Activated CD4-positive, alpha-beta T cell treated with anti-CD3 and anti-CD28 coated beads for 36 hours (primary cell): ENCODE measurements at regions of chr17 and their contacts with region 1.

Region 1: DNA sequence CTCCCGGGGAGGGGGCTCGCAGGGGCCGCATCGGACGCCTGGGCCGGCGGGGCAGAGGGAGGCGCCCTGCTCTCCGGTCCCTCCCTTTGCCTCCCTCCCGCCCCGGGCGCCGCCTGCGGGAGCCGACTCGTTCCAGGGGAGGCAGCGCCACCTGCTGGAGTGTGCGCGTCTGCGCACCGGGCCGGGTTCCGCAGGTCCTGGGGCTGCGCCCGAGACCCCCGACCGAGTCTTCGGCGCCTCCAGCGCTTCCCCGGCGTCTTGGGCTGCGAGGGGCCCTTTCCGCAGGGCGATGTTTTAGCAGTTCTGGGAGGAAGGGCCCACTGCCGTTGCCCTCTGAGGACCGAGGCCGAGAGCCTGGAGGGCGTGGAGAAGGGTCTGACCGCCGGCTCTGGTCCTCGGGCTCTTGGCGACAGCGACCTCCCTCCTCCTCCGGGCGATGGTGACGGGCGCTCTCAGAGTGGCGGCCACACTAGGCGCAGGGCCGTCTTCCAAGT is 106.3 kb downstream of the SEC14L1 start:
- DNase-seq: peak; percentile 93
- ATAC-seq: peak; percentile 95
- H3K4me3 Mint-ChIP-seq: peak overlapping the region; percentile 32
- H3K27ac Mint-ChIP-seq: no peak overlapping the region
- H3K4me1 Mint-ChIP-seq: peaks cover 6% of the 10 kb centered on the region
- H3K27me3 Mint-ChIP-seq: peaks cover 16% of the 10 kb centered on the region

Region 2: DNA sequence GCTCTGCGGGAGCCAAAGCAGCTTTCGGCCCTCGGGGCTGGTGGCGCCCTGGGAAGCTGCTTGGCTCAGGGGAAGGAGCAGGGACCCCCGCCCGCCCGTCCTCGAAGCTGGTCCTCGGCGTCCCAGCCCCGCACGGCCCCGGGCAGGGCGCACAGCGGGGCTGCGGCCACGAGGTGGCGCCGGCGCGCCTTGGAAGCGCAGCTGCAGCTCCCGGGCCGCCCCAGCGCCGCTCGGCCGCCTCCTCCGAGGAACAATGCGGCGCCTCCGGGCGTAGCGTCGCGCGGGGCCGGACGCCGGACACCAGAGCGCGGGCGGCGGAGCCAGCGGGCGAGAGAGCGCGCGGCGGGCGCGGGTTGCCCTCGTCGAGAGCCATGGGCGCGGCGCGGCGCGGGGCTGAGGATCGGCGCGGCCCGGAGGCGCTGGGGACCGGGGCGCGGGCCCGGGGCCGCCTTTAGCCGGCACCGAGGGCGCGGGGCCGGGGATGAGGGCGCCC is 378.9 kb before region 1 on chr17 and contains the start of gene MGAT5B:
- CTCF ChIA-PET with region 1: no interaction called
- POLR2A ChIA-PET with region 1: no interaction called
- intact Hi-C with region 1: loop called (anchors 1 to 10 kb)
- DNase-seq: peak; percentile 87
- ATAC-seq: peak; percentile 96
- H3K4me3 Mint-ChIP-seq: peak within 1 kb of the TSS; percentile 41
- H3K27ac Mint-ChIP-seq: no peak within 1 kb of the TSS
- H3K4me1 Mint-ChIP-seq: peaks cover 11% of the 10 kb centered on the region
- H3K27me3 Mint-ChIP-seq: peaks cover 23% of the 10 kb centered on the region
- total RNA-seq, gene MGAT5B: not detected

Region 3: DNA sequence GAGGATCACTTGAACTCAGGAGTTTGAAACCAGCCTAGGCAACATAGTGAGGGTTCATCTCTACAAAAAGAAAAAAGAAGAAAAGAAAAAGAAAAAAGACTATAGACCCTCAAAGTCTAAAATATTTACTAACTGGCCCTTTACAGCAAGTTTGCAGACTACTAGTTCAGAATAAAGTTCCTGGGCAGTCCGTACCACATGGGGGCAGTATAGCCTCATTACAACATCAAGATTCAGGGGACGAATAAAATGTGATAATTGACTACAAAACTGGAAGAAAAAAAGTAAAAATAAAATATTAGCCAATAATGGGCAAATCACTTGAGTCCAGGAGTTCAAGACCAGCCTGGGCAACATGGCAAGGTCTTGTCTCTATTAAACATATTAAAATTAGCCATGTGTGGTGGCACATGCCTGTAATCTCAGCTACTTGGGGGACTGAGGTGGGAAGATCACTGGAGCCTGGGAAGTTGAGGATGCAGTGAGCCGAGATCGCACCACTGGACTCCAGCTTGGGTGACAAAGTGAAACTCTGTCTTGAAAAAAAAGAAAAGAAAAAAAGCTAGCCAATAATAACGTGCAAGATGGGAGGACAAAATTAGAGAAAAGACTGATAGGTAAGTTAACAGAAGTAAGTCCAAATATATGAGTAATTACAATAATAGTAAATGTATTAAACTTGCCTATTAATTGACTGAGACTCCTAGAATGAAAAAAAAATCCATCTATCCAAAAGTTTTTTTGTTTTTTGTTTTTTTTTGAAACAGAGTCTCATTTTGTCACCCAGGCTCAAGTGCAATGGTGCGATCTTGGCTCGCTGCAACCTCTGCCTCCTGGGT is 235.7 kb before region 1 on chr17:
- CTCF ChIA-PET with region 1: interaction called, 4 read pairs
- POLR2A ChIA-PET with region 1: no interaction called
- intact Hi-C with region 1: loop called (anchors 1 to 2 kb)
- DNase-seq: peak; percentile 72
- ATAC-seq: no peak
- H3K4me3 Mint-ChIP-seq: no peak overlapping the region
- H3K27ac Mint-ChIP-seq: no peak overlapping the region
- H3K4me1 Mint-ChIP-seq: no peaks in the 10 kb centered on the region
- H3K27me3 Mint-ChIP-seq: peaks cover 3% of the 10 kb centered on the region

Region 4: DNA sequence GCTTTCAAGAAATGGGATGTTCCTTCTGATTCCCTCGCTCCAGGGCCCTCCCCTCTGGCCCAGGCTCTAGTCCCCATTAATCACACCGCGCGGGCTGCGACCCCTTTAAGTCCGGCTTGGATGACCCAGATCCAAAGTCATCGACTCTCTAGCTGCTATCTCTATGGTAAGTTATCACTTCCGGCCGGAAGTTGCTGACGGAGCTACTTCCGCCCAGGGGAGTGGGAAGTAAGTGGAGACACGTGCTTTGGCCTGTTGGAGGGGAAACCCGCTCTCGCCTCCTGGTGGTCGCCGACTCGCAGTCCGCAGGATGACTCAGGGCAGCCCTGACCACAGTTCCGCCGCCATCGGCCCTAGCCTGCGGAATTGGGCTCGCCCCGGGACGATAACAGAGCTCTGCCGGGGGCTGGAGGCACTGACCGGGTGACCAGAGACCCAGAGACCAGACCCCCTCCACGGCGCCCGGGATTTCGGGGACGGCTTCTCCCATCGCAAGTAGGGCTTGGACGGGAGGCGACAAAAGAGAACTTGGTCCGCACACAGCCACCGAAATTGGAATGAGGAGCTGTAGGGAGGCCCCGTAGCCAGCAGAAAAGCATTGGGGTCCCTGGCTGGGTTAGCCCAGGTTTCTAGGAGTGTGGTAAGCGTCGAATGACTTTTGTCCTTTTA is 158.5 kb before region 1 on chr17:
- CTCF ChIA-PET with region 1: interaction called, 14 read pairs
- POLR2A ChIA-PET with region 1: interaction called, 5 read pairs
- intact Hi-C with region 1: loop called (anchors 1 kb)
- DNase-seq: peak; percentile 89
- ATAC-seq: peak; percentile 83
- H3K4me3 Mint-ChIP-seq: peak overlapping the region; percentile 98
- H3K27ac Mint-ChIP-seq: peak overlapping the region; percentile 97
- H3K4me1 Mint-ChIP-seq: peaks cover 50% of the 10 kb centered on the region
- H3K27me3 Mint-ChIP-seq: no peaks in the 10 kb centered on the region

Region 5: DNA sequence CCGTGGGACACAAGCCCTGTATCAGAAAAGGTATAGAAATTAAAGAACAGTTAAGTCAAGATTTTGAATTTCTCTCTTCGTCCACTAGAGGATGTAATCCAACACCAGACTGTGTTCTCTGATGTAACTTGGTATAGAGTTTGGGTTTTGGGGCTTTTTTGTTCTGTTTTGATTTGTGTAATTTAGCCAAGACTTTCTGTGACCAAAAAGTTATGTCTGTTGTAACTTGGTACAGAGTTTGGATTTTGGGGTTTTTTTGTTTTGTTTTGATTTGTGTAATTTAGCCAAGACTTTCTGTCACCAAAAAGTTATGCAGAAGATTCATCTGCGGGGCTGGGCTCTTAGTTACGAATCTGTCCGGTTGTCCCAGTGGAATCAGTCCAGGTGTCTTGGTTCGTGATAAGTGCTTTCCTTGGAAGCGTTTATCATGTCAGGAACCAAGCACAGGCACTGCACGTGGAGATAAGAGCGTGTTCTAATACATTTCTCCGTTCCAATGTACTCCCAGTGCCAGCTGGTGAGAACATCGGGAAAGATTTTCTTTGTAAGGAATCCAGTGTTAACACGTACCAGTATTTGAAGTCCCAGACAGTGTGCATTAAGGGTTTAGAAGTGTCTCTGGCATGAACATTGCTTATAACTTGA is 150.4 kb before region 1 on chr17:
- CTCF ChIA-PET with region 1: interaction called, 3 read pairs
- POLR2A ChIA-PET with region 1: no interaction called
- intact Hi-C with region 1: loop called in 1 of 2 experiments (anchors 2 kb)
- DNase-seq: no peak
- ATAC-seq: peak; percentile 65
- H3K4me3 Mint-ChIP-seq: no peak overlapping the region
- H3K27ac Mint-ChIP-seq: peak overlapping the region; percentile 86
- H3K4me1 Mint-ChIP-seq: peaks cover 45% of the 10 kb centered on the region
- H3K27me3 Mint-ChIP-seq: no peaks in the 10 kb centered on the region